Right ventricle myocardium inferior (tissue), 1 donor: ENCODE measurements at regions of chr17 and their contacts with region 1.

Region 1: DNA sequence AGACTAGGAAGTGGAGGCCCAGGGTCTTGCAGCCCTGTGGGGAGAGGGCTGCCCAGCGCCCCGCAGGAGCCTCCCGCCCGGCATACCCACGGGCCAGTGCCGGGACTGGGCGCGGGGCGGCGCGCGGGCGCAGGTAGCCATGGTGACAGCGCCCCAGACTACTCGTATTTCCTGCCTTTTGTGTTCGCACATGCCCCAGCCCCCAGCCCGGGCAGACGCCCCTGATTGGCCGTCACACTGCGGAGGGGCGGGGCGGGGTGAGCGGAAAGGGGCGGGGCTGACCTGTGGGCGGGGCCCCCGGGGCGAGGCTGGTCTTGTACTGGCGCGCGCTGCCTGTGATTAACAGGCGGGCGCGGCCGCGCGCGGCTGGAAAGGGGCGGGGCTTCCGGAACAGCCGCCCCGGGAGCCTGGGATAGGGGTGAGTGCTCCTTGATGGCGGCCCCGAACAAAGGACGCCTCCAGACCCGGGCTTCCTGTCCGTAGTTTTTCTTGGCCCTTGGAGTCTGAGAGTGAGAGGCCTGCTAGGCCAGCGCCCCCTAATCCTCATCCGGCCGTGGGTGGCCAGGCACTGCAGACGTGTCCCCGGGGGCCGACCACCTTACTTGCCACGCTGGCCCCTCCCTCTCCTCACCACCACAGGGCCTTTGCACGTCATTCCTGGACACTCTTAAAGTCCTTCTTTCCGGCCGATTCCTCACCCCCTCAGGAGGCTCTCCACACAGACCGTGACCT is 71.0 kb downstream of the RAI1 start:
- DNase-seq: peak; percentile 98
- ATAC-seq: peak; percentile 88

Region 2: DNA sequence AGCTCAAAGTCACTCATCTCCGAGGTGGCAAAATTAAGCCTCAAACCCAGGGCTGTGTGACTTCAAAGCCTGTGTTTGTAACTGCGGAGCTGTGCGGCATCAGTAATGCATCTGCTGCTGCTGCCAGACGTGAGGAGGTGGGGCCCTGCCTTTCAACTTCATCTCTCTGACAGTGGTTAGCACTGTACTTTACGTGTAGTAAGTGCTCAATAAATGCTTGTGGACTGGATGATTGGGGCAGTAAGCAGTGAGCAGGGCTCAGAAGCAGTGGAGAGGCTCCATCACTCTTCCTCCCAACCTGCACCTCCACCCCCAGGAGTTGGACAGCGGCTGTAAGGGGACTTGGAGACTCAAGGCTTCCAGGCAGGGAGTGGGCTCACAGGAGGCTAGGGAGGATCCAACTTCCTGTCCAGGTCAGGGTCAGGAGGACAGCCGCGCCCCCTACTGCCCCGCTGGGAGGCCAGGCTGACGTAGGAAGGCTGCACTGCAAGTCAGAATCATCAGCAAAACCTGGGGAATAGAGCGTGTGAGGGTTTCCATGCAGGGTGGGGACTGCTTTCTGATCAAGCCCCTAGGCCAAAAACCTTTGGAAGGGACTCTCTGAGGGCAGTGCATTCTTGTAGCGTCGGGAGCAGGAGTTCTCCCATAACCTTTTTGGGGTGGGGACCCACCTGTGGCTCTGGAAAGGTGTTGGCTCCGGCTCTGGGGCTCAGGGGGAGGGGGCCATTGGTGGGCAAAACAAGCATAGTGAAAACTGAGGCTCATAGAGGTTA is 49.2 kb before region 1 on chr17:
- intact Hi-C with region 1: no loop called
- DNase-seq: no peak
- ATAC-seq: no peak

Region 3: DNA sequence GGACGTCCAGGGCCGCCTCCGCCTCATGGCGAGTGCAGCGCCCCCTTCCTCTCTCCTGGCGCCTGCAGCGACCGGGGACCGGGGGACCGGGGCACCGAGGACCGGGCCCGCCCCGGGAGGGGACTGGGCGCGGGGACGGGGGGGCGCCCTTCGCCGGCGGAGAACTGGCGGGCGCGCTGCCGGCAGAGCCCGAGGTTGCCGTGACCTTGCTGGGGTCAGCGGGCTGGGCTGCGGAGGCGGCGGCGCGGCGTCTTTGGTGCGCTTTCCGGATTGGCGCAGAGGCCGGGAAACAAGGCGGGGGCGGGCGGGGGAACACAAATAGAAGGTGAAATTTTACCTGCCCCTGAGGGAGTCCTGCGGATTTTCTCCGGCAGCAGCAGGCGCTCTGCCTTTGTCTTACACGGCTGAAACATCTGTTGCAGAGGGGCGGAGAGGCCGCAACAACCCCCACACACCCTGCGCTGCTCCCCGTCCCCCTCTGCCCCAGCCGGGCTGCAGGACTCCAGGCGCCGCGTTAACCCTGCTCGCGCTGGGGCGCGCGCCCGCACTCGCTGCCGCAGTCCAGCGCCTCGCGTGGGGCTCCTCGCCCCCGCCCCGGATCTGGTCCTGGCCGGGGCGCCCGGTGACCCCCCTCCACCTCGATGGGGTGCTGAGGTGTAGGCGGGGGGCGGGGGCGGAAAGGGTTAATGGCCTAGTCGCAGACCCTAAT is 31.0 kb after region 1 on chr17:
- intact Hi-C with region 1: loop called (anchors 2 kb)
- DNase-seq: no peak
- ATAC-seq: peak; percentile 37

Region 4: DNA sequence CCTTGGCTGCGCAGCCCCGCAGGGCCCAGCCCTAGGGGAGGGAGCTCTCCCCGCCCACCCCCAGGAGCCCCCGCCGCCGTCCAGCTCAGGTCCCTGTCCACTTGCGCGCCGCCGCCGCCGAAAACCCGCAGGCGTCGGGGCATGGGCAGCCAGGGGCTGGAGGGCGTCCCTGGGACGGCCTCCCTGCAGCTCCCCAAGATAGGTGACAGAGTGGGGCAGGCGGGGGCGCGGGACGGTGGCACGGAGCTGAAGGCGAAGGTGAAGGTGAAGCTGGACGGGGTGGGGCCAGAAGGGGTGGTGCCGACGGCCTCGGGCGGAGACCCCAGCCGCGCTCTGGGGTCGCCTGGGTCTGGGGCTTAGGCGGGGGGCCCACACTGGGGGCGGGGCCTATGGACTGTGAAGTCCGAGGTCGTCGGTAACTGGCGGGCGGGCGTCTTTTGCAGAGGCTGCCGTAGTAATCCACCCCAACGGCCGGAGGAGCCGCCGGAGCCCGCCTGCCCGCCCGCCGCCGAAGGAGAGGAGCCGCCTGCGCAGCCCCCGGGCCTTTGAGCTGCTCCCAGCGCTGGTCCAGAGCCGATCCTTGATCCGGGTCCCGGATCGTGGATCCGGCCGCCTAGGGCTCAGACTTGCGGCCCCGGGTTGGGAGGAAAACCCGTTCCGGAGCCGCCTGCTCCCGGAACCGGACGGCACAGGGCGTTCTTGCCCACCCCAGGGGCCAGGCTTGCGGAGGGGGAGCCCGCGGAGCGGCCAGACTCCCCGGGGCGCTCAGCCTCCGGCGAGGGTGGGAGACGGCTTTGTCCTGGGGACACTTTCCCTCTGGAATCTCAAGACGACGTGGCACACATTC is 57.5 kb after region 1 on chr17:
- intact Hi-C with region 1: no loop called
- DNase-seq: no peak
- ATAC-seq: peak; percentile 47